ENCODE measurements at regions of chr2 and their contacts with region 1.

Region 1: DNA sequence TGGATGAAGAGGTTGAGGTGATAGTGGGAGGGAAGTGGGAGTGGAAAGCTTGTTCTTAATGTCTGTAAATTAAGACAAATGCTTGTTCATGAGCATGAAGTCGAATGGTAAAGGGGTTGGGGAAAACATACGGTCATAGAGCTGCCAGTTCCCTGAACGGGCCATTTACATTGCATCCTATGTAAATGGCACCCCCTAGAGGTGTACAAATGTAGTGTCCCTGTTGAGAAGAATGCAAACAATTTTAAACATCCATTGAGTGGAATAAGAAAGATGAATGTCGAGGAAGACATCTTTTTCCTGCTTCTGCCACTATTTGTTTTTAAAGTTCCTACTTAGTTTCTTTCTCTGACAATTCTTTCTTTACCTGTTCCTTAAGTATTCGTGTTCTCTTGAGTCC is 155.7 kb downstream of the RDH14 start:
- DNase-seq: peak; percentile 21 to 35 (median 26)
- ATAC-seq: peak; percentile 78
- H3K4me3 ChIP-seq: no peak overlapping the region
- H3K27ac ChIP-seq: no peak overlapping the region
- H3K4me1 ChIP-seq: no peaks in the 10 kb centered on the region
- H3K27me3 ChIP-seq: no peaks in the 10 kb centered on the region
- CTCF ChIP-seq: peak; percentile 29 to 53 (median 50); a peak in 4 of 6 replicates
- EP300 ChIP-seq: no peak
- POLR2A ChIP-seq: no peak
- RAD21 ChIP-seq: peak in 1 of 2 experiments; percentile 46; a peak in 2 of 4 replicates

Region 2: DNA sequence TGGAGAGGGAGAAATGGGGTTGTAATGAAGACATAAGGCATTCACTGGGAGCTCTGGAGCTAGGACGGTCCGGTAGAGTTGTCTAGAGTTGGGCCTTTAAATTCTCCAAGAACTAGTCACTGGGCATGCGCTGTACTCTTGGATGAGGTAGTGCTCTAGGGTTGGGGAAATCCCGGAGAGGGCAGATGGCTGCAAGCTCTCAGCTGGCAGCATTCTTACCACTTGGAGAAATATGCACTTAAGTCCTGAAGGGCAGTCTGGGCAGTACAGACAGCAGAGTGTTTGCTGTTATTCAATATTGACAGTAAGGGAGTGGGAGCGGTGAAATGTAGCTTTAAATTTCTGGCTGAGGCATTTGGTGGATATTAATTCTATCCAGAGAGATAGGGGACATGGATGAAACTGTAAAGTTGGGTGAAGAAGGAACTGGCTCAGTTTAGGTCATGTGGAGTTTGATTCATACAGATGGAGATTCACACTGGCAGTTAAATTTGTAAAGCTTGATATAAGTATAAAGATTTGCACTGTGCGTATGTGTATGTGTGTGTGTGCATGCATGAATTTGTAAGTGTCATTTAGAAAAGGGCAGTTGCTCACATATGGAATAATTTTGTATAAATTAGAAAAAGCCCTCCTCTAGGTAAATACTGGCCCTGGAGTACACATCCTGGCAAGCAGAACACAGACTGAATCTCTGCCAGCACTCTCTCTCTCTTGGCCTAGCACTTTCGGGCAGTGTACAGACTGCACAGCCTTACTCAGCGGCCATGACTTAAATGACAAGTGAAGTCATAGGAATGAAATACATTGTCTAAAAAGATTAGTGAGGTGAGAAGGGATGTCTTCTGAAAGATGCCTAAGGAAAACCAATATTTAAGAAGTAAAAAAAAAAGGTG is 58.6 kb before region 1 on chr2:
- CTCF ChIA-PET with region 1: no interaction called
- POLR2A ChIA-PET with region 1: no interaction called
- in situ Hi-C with region 1: no loop called
- intact Hi-C with region 1: no loop called
- DNase-seq: no peak
- ATAC-seq: no peak
- H3K4me3 ChIP-seq: no peak overlapping the region
- H3K27ac ChIP-seq: no peak overlapping the region
- H3K4me1 ChIP-seq: no peaks in the 10 kb centered on the region
- H3K27me3 ChIP-seq: no peaks in the 10 kb centered on the region
- CTCF ChIP-seq: no peak
- EP300 ChIP-seq: no peak
- POLR2A ChIP-seq: no peak
- RAD21 ChIP-seq: no peak

Region 3: GRCh38 chr2:18387441-18388206 is 17.1 kb before region 1 on chr2:
- CTCF ChIA-PET with region 1: interaction called, 4 read pairs
- POLR2A ChIA-PET with region 1: no interaction called
- in situ Hi-C with region 1: no loop called
- intact Hi-C with region 1: loop called (anchors 2 kb)
- DNase-seq: peak; percentile 52 to 75 (median 71)
- ATAC-seq: peak; percentile 98
- H3K4me3 ChIP-seq: no peak overlapping the region
- H3K27ac ChIP-seq: no peak overlapping the region
- H3K4me1 ChIP-seq: no peaks in the 10 kb centered on the region
- H3K27me3 ChIP-seq: no peaks in the 10 kb centered on the region
- CTCF ChIP-seq: peak; percentile 72 to 87 (median 85)
- EP300 ChIP-seq: no peak
- POLR2A ChIP-seq: no peak
- RAD21 ChIP-seq: peak; percentile 68 to 73